Dorsolateral prefrontal cortex (tissue), 120 donors: ENCODE measurements at regions of chr22 and their contacts with region 1.

Region 1: GRCh38 chr22:23069502-23070357 is 589 bp upstream of the GNAZ start:
- DNase-seq: peak; percentile 91 to 98 (median 95)
- H3K4me3 ChIP-seq: peak overlapping the region; percentile 46 to 89 (median 75)
- H3K27ac ChIP-seq: peak overlapping the region in 52 of 59 donors; percentile 7 to 91 (median 72)
- H3K27me3 ChIP-seq: no peaks in the 10 kb centered on the region
- CTCF ChIP-seq: peak in 24 of 56 donors; percentile 5 to 41 (median 17)

Region 2: DNA sequence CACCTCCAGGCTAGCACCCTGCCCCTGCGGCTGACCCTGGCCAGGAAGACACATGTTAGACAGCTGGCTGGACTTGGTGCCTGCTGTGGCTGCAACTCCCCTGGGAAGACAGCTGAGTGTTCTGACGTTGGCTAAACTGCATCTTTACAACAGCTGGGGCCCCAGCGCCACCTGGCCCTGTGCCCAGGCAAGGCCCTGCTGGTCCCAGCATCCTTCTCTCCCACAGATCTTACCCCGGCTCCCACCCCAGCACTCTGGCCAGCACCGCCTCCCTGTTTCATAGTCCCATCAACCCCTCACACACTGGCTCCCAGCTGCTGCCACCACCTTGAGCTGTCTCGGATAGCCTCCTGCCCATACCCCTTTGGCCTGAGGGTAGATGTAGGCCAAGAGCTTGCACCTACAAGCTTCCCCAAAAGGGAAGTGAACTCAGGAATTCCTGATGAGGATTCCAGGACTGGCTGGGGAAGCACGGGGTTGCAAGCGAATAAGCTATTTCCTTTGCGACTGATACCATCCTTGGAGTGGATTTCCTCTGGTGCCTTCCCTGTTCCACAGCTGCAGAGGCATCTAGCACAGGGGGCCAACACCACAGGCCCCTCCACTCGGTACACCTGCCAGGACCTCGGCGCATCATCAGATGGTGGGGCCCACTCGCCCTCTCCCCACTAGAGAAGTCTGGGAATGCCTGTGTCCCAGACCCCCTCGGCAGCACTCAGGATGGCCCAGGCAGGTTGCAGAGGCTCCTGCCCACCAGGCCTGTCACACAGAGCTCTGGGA is 43.5 kb after region 1 on chr22:
- intact Hi-C with region 1: loop called in 1 of 2 experiments (anchors 2 kb)
- DNase-seq: peak in 9 of 10 donors; percentile 81 to 94 (median 87)
- H3K4me3 ChIP-seq: no peak overlapping the region
- H3K27ac ChIP-seq: peak overlapping the region; percentile 86 to 100 (median 99)
- H3K27me3 ChIP-seq: no peaks in the 10 kb centered on the region
- CTCF ChIP-seq: peak in 3 of 56 donors; percentile 13 to 19 (median 14)

Region 3: DNA sequence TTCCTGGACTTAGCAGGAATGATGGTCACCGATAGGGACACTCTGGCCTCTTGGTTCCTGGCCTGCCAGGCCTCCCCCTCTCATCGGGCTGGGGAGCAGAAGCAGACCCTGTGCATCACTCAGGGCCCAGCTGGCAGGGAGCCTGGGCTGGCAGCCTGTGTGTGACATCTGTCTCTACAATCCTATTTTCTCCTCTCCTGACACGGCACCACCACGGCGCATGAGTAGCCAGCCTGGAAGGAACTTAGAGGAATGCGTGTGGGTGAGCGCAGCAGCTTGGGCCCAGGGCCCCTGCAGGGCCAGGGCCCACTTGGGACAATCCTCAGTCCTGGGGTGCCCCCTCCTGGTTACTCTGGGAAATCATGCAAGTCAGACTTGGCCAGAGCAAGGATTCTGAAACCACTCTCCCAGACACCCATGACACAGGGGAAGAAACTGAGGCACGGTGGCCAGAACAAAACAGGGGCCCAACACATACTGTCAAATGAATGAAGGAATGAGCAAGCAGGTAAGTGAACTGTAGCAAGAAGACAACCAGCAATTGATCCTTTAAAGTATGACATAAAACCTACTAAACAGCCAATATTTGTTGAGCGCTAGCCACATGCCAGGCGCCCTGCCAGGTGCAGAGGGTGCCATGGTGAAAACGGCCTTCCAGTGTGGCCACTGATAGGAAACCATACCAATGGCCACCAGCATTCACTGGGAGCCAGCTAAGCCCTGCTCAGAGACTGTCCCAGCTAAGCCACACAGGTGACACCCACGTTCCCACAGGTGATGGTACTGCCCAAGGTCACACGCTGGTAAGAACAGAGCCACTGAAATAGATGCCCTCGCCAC is 58.8 kb after region 1 on chr22:
- intact Hi-C with region 1: loop called (anchors 5 kb)
- DNase-seq: peak; percentile 79 to 92 (median 88)
- H3K4me3 ChIP-seq: no peak overlapping the region
- H3K27ac ChIP-seq: peak overlapping the region; percentile 40 to 100 (median 86)
- H3K27me3 ChIP-seq: no peaks in the 10 kb centered on the region
- CTCF ChIP-seq: peak; percentile 64 to 98 (median 91)

Region 4: GRCh38 chr22:23281406-23282088 is 211.8 kb after region 1 on chr22:
- intact Hi-C with region 1: loop called in 1 of 2 experiments (anchors 5 kb)
- DNase-seq: peak; percentile 84 to 92 (median 91)
- H3K4me3 ChIP-seq: peak overlapping the region in 3 of 59 donors; percentile 9 to 17 (median 13)
- H3K27ac ChIP-seq: peak overlapping the region in 52 of 59 donors; percentile 2 to 85 (median 68)
- H3K27me3 ChIP-seq: no peaks in the 10 kb centered on the region
- CTCF ChIP-seq: peak; percentile 85 to 99 (median 97)